ENCODE measurements at regions of chr21 and their contacts with region 1.

Region 1: GRCh38 chr21:41879190-41879998 is at the start of gene PRDM15:
- DNase-seq: no peak
- ATAC-seq: peak; percentile 68
- H3K4me3 ChIP-seq: peak within 1 kb of the TSS; percentile 94
- H3K27ac ChIP-seq: peak within 1 kb of the TSS; percentile 86
- H3K4me1 ChIP-seq: peaks cover 13% of the 10 kb centered on the region
- H3K27me3 ChIP-seq: no peaks in the 10 kb centered on the region
- CTCF ChIP-seq: no peak
- EP300 ChIP-seq: no peak
- POLR2A ChIP-seq: peak; percentile 82
- RAD21 ChIP-seq: no peak
- polyA plus RNA-seq, gene PRDM15: 2.2 to 2.8 TPM

Region 2: DNA sequence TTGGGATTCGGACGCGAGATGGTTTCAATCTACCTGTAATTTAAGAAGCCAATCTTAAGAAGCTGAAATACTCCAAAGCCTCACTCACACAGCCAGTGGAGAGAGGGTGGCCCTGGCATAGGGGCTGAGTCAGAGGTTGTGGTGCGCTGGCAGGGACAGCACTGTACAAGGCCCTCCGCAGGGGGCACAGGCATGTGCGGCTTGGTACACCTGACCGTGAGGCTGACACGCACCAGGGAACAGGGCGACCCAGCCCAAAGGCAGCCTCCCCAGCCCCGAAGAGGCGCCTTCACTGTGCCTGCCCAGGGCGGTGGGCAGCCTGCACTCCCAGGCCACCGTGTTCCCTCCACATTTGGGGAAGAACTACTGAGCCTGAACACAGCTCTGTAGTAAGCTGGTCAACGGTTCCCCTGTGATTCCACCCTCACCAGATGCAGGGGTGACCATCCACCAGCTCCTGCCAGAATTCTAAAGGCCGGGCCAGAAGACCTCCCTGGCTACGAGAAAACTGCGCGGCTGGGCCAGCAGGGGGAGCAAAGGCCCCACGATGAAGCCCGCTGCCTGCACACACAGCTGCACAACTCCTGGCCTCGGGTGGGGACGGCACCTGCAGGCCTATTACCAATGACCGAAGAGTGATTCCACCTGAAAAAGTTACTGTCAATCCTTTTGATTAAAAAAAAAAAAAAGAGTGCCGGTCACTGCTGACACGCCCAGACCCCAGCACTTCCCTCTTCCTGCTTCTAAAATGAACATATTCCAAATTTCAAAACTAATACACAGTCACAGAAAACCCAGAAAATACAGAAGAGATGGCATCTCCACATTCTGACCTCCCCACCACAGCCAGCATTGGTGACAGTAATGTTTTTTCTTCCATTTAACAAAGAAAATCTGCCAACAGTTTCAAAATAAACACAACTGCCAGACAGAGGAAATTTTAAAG is 62.9 kb before region 1 on chr21:
- CTCF ChIA-PET with region 1: interaction called, 13 read pairs
- POLR2A ChIA-PET with region 1: no interaction called
- RAD21 ChIA-PET with region 1: interaction called, 7 read pairs
- SMC1A ChIA-PET with region 1: interaction called, 11 read pairs
- in situ Hi-C with region 1: no loop called
- intact Hi-C with region 1: no loop called
- DNase-seq: no peak
- ATAC-seq: peak; percentile 99
- H3K4me3 ChIP-seq: no peak overlapping the region
- H3K27ac ChIP-seq: no peak overlapping the region
- H3K4me1 ChIP-seq: peaks cover 5% of the 10 kb centered on the region; the same call in 1 of the 2 replicates
- H3K27me3 ChIP-seq: no peaks in the 10 kb centered on the region
- CTCF ChIP-seq: peak; percentile 84 to 93 (median 87)
- EP300 ChIP-seq: no peak
- POLR2A ChIP-seq: no peak
- RAD21 ChIP-seq: peak; percentile 88

Region 3: DNA sequence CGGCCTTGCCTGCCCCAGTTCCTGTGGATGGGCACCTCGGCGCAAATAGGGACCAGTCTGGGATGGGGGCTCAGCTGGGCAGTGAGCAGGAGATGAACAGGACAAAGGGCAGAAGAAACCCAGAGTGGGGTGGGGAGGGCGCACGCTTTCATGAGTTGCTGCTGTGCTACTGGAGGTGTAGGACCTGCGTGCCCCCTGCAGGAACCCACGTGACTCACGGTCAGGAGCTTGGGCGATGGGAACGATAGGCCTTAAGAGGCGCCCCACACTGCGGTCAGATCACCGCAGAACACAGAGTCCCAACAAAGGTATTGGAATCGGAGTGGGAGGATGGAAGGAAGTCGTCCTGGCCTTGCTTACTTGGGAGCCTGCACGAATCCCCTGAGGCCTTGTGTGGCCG is 17.4 kb before region 1 on chr21:
- CTCF ChIA-PET with region 1: interaction called, 21 read pairs
- POLR2A ChIA-PET with region 1: interaction called, 14 read pairs
- RAD21 ChIA-PET with region 1: interaction called, 28 read pairs
- SMC1A ChIA-PET with region 1: interaction called, 18 read pairs
- in situ Hi-C with region 1: no loop called
- intact Hi-C with region 1: loop called (anchors 2 kb)
- DNase-seq: no peak
- ATAC-seq: peak; percentile 49
- H3K4me3 ChIP-seq: peak overlapping the region; percentile 58
- H3K27ac ChIP-seq: peak overlapping the region; percentile 91
- H3K4me1 ChIP-seq: peaks cover 51% of the 10 kb centered on the region
- H3K27me3 ChIP-seq: no peaks in the 10 kb centered on the region
- CTCF ChIP-seq: peak; percentile 43 to 60 (median 49); a peak in 5 of 6 replicates
- EP300 ChIP-seq: no peak
- POLR2A ChIP-seq: no peak
- RAD21 ChIP-seq: peak; percentile 47; the same call in 1 of the 2 replicates

Region 4: DNA sequence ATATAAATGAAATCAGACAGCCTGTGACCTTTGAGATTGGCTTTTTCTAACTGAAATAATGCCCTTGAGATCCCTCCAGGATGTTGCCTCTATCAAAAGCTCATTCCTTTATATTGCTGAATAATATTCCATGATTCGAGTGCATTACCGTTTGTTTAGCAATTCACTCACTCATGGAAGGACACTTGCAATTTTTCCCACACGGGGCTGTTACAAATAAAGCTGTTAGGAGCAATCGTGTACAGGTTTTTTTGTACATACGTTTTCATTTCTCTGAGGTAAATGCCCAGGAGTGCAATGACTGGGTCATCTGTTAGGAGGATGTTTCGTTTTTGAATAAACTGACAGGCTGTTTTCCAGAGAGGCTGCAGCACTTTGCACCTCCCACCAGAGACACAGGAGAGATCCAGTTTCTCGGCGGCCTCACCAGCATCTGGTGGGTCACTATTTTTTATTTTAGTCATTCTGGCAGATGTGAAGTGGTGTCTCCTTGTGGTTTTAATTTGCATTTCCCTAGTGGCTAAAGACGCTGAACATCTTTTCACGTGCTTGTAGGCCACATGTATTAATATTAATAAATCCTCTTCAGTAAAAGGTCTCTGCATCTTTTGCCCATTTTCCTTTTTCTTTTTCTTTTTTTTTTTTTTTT is 11.2 kb before region 1 on chr21:
- CTCF ChIA-PET with region 1: interaction called, 21 read pairs
- POLR2A ChIA-PET with region 1: interaction called, 14 read pairs
- RAD21 ChIA-PET with region 1: interaction called, 28 read pairs
- SMC1A ChIA-PET with region 1: interaction called, 18 read pairs
- in situ Hi-C with region 1: no loop called
- intact Hi-C with region 1: loop called (anchors 2 kb)
- DNase-seq: peak; percentile 79
- ATAC-seq: peak; percentile 60
- H3K4me3 ChIP-seq: peak overlapping the region; percentile 57; the same call in 1 of the 2 replicates
- H3K27ac ChIP-seq: peak overlapping the region; percentile 64
- H3K4me1 ChIP-seq: peaks cover 54% of the 10 kb centered on the region
- H3K27me3 ChIP-seq: no peaks in the 10 kb centered on the region
- CTCF ChIP-seq: no peak
- EP300 ChIP-seq: peak; percentile 68 to 85; a peak in 3 of 4 replicates
- POLR2A ChIP-seq: 0 out of 2 replicates have a peak, but pooled peaks have one; percentile 23
- RAD21 ChIP-seq: no peak

Region 5: DNA sequence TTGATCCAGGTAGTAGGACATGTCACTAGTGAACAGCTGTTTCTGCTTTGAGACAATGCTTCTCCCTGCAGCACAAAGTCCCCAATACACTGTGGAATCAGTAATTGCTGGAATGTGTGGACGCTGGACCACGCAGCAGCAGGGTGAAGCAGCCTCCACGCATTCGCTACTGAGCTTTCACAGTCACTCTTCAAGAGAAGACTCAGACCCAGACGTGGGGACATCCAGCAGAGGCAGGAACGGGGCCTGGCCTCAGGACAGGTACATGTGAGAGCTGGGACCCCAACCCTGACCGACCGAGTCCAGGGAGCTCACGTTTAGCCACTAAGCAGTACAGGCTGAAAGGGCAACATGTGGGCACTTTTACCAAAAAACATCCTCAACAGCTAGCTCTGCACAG is 33.8 kb after region 1 on chr21:
- CTCF ChIA-PET with region 1: no interaction called
- POLR2A ChIA-PET with region 1: no interaction called
- RAD21 ChIA-PET with region 1: no interaction called
- SMC1A ChIA-PET with region 1: no interaction called
- in situ Hi-C with region 1: no loop called
- intact Hi-C with region 1: no loop called
- DNase-seq: no peak
- ATAC-seq: no peak
- H3K4me3 ChIP-seq: no peak overlapping the region
- H3K27ac ChIP-seq: no peak overlapping the region
- H3K4me1 ChIP-seq: no peaks in the 10 kb centered on the region
- H3K27me3 ChIP-seq: no peaks in the 10 kb centered on the region
- CTCF ChIP-seq: no peak
- EP300 ChIP-seq: no peak
- POLR2A ChIP-seq: no peak
- RAD21 ChIP-seq: no peak

Region 6: DNA sequence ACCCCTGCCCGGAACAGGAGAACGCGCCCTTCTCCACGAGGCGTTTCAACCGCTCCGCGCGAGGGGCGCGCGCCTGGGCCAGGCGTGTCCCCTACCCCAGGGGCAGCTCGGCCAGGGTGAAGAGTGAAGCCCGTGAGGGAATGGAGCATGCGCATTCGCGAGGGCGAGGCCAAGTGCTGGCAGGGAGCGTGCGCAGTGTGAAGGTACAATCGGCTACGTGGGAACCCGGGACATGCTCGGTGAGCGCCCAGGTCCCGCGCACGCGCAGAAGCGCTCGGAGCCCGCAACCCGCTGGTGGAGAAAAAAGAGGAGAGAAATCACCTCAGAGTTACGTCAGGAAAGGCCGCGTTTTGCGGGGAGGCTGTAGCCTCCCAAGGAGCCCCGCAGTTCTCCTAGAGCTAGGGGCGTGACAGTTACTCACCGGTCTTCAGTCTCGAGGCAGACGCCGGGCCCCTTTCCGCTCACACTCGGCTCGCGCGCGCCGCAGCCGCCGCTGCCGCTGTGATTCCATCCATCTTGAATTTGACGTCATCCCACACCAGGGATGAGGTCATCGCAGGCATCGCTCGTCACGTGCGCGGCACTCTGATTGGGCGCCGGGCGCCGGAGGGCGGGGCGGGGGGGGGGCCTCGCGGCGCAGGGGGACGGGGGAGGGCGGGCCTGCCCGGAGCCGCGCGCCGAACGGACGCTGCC is 130.6 kb after region 1 on chr21 and contains the start of gene ZBTB21:
- CTCF ChIA-PET with region 1: interaction called, 8 read pairs
- POLR2A ChIA-PET with region 1: interaction called, 4 read pairs
- RAD21 ChIA-PET with region 1: interaction called, 14 read pairs
- SMC1A ChIA-PET with region 1: interaction called, 12 read pairs
- in situ Hi-C with region 1: no loop called
- intact Hi-C with region 1: loop called (anchors 5 kb)
- DNase-seq: peak; percentile 96
- ATAC-seq: peak; percentile 89
- H3K4me3 ChIP-seq: peak within 1 kb of the TSS; percentile 81
- H3K27ac ChIP-seq: peak within 1 kb of the TSS; percentile 96
- H3K4me1 ChIP-seq: peaks cover 5% of the 10 kb centered on the region
- H3K27me3 ChIP-seq: no peaks in the 10 kb centered on the region
- CTCF ChIP-seq: no peak
- EP300 ChIP-seq: peak in 1 of 2 experiments; percentile 27; a peak in 1 of 4 replicates
- POLR2A ChIP-seq: peak; percentile 79
- RAD21 ChIP-seq: no peak
- polyA plus RNA-seq, gene ZBTB21: 1.8 to 2.3 TPM